ENCODE measurements at regions of chr13 and their contacts with region 1.

Region 1: GRCh38 chr13:98033277-98034247 is 80.1 kb downstream of the IPO5 start:
- DNase-seq: no peak
- ATAC-seq: no peak
- H3K4me3 ChIP-seq: no peak overlapping the region
- H3K27ac ChIP-seq: no peak overlapping the region
- H3K4me1 ChIP-seq: no peaks in the 10 kb centered on the region
- H3K27me3 ChIP-seq: no peaks in the 10 kb centered on the region
- CTCF ChIP-seq: no peak

Region 2: GRCh38 chr13:97695684-97696083 is 337.9 kb before region 1 on chr13:
- intact Hi-C with region 1: no loop called
- DNase-seq: no peak
- ATAC-seq: no peak
- H3K4me3 ChIP-seq: no peak overlapping the region
- H3K27ac ChIP-seq: no peak overlapping the region
- H3K4me1 ChIP-seq: no peaks in the 10 kb centered on the region
- H3K27me3 ChIP-seq: no peaks in the 10 kb centered on the region
- CTCF ChIP-seq: no peak

Region 3: DNA sequence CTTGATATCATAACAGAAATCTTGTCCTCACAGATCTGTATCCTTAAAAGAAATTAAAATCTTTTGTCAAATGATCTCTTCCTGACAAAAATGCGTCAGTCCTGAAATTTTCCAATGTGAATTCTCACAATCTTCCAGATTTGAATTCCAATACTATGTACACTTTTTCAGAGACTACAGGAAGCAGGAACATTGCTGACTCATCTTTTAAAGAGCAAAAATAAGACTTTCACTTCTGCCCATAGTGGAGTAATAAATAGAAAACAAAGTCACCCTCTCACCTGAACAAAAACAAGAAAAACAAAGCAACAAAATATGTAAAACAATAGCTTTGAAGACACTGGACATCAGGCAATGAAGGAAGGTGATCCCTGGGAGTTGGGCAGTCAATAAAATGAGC is 247.1 kb before region 1 on chr13:
- intact Hi-C with region 1: no loop called
- DNase-seq: no peak
- ATAC-seq: no peak
- H3K4me3 ChIP-seq: no peak overlapping the region
- H3K27ac ChIP-seq: no peak overlapping the region
- H3K4me1 ChIP-seq: no peaks in the 10 kb centered on the region
- H3K27me3 ChIP-seq: no peaks in the 10 kb centered on the region
- CTCF ChIP-seq: no peak

Region 4: DNA sequence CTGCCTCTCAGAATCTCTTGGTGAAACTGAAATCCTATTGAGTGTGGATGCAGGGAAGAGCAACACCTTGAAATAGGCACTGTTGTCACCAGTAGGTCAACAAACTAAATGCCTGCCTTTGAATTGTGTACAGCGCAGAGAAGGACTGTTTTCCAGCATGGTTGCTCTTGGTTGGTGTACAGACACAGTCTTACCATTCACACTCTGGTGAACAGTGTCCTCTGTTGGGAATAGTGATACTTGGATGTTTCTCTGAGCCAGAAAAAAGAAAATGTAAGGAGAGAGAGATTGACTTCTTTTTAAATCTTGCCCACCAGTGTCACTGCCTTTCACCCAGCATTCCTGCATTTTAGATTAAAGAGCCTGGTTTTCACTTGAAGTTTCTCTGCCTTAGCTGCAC is 363.7 kb after region 1 on chr13:
- intact Hi-C with region 1: loop called in 1 of 2 experiments (anchors 10 kb)
- DNase-seq: no peak
- ATAC-seq: peak in 3 of 4 donors; percentile 45 to 63 (median 49)
- H3K4me3 ChIP-seq: no peak overlapping the region
- H3K27ac ChIP-seq: no peak overlapping the region
- H3K4me1 ChIP-seq: peaks cover 3% of the 10 kb centered on the region
- H3K27me3 ChIP-seq: no peaks in the 10 kb centered on the region
- CTCF ChIP-seq: peak; percentile 29